ENCODE measurements at regions of chr1 and their contacts with region 1.

Region 1: DNA sequence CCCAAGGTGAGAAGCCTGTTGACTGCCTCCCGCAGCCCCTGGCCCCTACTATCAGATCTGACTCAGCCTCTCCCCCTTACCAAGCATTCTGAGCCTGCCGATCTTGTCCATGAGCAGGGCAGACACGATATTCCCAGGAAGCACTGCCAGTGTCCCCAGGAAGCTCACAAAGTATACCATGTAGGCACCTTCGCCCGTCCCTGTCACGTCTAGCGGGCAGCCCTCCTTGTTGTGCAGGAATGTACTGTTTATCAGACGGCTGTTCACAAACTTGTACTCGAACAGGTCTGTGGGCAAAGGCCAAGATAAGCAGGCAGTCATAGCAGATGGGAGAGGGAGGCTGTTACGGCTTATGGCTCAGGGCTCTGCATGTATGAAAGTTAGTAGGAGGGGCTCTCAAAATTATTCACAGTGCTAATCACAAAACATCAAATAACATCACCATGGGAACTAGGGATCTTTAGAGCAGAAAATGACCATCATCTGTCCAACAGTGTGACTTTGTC is 7.3 kb downstream of the BOLA1 start:
- DNase-seq: no peak
- H3K4me3 ChIP-seq: no peak overlapping the region
- H3K27ac ChIP-seq: no peak overlapping the region
- H3K4me1 ChIP-seq: no peaks in the 10 kb centered on the region
- CTCF ChIP-seq: no peak

Region 2: GRCh38 chr1:149917571-149918144 is 11.0 kb after region 1 on chr1 and contains the start of gene SV2A:
- CTCF ChIA-PET with region 1: no interaction called
- POLR2A ChIA-PET with region 1: interaction called, 3 read pairs
- intact Hi-C with region 1: loop called (anchors 2 kb)
- DNase-seq: peak; percentile 17
- H3K4me3 ChIP-seq: peak within 1 kb of the TSS; percentile 64
- H3K27ac ChIP-seq: no peak within 1 kb of the TSS
- H3K4me1 ChIP-seq: peaks cover 15% of the 10 kb centered on the region
- CTCF ChIP-seq: no peak
- total RNA-seq, gene SV2A: 1.0 and 1.3 TPM in 2 replicates

Region 3: DNA sequence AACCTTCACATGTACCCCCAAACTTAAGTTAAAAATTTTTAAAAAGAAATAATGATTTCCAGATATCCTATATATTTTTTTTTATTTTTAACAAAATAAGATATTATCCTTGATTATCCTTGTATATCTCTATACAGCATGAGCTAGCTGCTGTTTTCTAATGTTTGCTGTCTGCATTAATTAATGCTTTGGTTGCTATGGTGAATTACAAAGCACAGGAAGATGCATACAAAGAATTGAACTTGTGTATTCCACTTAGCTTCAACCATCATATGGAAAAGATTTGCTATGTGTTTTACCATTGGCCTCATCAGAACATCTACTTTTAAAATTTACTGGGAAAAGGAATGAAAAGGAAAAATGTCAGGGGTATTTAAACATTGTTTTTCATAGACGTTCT is 196.4 kb after region 1 on chr1:
- CTCF ChIA-PET with region 1: no interaction called
- POLR2A ChIA-PET with region 1: no interaction called
- intact Hi-C with region 1: no loop called
- DNase-seq: no peak
- H3K4me3 ChIP-seq: no peak overlapping the region
- H3K27ac ChIP-seq: no peak overlapping the region
- H3K4me1 ChIP-seq: no peaks in the 10 kb centered on the region
- CTCF ChIP-seq: no peak

Region 4: DNA sequence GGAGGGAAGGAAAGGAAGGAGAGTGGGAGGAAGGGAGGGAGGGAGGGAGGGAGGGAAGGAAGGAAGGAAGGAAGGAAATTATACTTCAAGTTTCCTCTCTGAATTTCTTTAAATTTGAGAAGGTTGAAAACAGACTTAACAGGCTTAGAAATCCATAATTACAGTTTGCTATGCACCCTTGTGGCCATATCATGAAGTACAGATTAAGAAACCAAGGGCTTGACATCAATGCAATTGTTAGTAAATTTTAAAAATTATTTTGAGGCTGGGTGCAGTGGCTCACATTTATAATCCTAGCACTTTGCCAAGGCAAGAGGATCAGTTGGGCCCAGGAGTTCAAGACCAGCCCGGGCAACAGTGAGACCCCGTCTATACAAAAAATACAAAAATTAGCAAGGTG is 314.9 kb after region 1 on chr1:
- CTCF ChIA-PET with region 1: no interaction called
- POLR2A ChIA-PET with region 1: no interaction called
- intact Hi-C with region 1: no loop called
- DNase-seq: peak; percentile 38
- H3K4me3 ChIP-seq: no peak overlapping the region
- H3K27ac ChIP-seq: no peak overlapping the region
- H3K4me1 ChIP-seq: peaks cover 4% of the 10 kb centered on the region
- CTCF ChIP-seq: peak; percentile 67